CD14-positive monocyte (primary cell): ENCODE measurements at regions of chr3 and their contacts with region 1.

Region 1: GRCh38 chr3:11803977-11804892 is 42.5 kb downstream of the TAMM41 start:
- DNase-seq: peak; percentile 8 to 10 (median 9)
- H3K4me3 ChIP-seq: no peak overlapping the region
- H3K4me3 Mint-ChIP-seq: no peak overlapping the region
- H3K27ac ChIP-seq: no peak overlapping the region
- H3K27ac Mint-ChIP-seq: no peak overlapping the region
- H3K4me1 ChIP-seq: no peaks in the 10 kb centered on the region
- H3K4me1 Mint-ChIP-seq: no peaks in the 10 kb centered on the region
- H3K27me3 ChIP-seq: no peaks in the 10 kb centered on the region
- H3K27me3 Mint-ChIP-seq: no peaks in the 10 kb centered on the region
- CTCF ChIP-seq: peak; percentile 72

Region 2: DNA sequence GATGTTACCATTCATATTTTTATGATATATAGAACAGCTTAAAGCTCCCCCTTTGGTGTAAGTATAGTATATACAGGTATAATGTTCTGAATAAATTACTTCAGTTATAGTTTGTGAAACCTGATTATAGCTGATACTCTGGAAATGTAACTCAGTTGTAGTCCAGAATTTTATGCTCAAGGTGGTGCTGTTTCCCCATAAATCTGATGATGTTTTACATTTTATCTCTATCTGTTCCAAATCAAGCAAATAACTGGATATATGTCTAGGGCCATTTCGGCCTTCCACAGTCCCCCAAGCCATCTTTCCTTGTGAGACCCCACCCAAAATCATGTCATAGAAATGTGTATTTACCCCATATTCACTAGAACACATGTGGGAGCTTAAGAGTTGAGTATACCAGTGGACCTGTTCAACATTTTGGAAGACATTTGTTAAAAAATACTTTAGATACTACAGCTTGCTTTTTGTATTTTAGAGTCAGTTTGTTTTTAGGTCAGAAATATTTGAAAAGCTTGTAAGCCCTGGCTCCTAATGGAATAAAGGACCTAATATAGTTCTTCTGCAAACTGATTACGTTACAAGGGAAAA is 424.9 kb before region 1 on chr3:
- intact Hi-C with region 1: loop called in 1 of 2 experiments (anchors 10 kb)
- DNase-seq: no peak
- H3K4me3 ChIP-seq: no peak overlapping the region
- H3K4me3 Mint-ChIP-seq: no peak overlapping the region
- H3K27ac ChIP-seq: no peak overlapping the region
- H3K27ac Mint-ChIP-seq: peak overlapping the region in 1 of 7 donors; percentile 51
- H3K4me1 ChIP-seq: no peaks in the 10 kb centered on the region
- H3K4me1 Mint-ChIP-seq: peaks cover 2% of the 10 kb centered on the region
- H3K27me3 ChIP-seq: no peaks in the 10 kb centered on the region
- H3K27me3 Mint-ChIP-seq: peaks cover 0 to 3% (median 0%) of the 10 kb centered on the region in 3 donors
- CTCF ChIP-seq: peak; percentile 54

Region 3: DNA sequence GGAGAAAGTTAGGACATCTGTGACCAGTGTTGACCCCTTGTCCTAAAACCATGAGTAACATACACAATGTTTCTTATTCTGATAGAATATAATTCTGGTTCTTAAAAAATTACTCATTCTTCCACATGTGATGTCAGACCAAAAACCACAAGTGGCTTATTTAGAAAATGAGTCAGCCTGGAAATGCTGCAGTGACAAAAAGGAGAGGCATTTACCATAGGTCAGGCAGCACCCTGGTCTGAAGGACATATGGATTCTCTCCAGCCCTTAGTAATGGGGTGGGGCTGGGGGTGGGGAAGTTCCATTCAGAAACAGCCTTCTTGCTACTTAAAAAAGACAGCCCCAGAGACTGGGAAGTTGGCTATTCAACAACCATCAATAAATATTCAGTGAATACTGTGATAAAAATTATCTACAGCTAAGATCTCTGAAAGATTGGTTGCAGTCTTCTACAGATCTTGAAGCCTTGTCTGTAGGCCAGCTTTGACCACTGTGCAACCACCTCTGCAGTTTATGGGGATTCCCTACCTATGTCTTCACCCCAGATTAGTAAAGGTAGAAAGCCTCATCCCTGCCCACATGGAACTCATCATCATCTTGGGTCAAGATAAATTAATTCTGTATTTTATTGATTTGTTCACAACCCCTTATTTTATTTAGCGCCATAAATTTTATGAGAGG is 389.4 kb after region 1 on chr3:
- intact Hi-C with region 1: no loop called
- DNase-seq: peak; percentile 95 to 99 (median 97)
- H3K4me3 ChIP-seq: peak overlapping the region in 1 of 3 experiments; percentile 41
- H3K4me3 Mint-ChIP-seq: peak overlapping the region; percentile 8 to 64
- H3K27ac ChIP-seq: peak overlapping the region; percentile 74 to 95
- H3K27ac Mint-ChIP-seq: peak overlapping the region; percentile 97 to 99 (median 97)
- H3K4me1 ChIP-seq: peaks cover 73 to 76% of the 10 kb centered on the region in 2 donors
- H3K4me1 Mint-ChIP-seq: peaks cover 73% of the 10 kb centered on the region
- H3K27me3 ChIP-seq: no peaks in the 10 kb centered on the region
- H3K27me3 Mint-ChIP-seq: peaks cover 0 to 5% (median 0%) of the 10 kb centered on the region in 3 donors
- CTCF ChIP-seq: no peak